IMR-90 (cell line): ENCODE measurements at regions of chr6 and their contacts with region 1.

Region 1: GRCh38 chr6:111483736-111484632 is 966 bp upstream of the REV3L start:
- DNase-seq: peak; percentile 97
- ATAC-seq: peak; percentile 74
- H3K4me3 ChIP-seq: peak overlapping the region; percentile 88
- H3K27ac ChIP-seq: peak overlapping the region; percentile 96
- H3K4me1 ChIP-seq: peaks cover 5% of the 10 kb centered on the region
- H3K27me3 ChIP-seq: no peaks in the 10 kb centered on the region
- CTCF ChIP-seq: 0 out of 2 replicates have a peak, but pooled peaks have one; percentile 3
- POLR2A ChIP-seq: peak; percentile 97
- RAD21 ChIP-seq: no peak; the same call in 1 of the 2 replicates

Region 2: GRCh38 chr6:111259089-111259831 is 224.7 kb before region 1 on chr6:
- CTCF ChIA-PET with region 1: interaction called, 5 read pairs
- POLR2A ChIA-PET with region 1: no interaction called
- dilution Hi-C with region 1: no loop called
- in situ Hi-C with region 1: no loop called
- intact Hi-C with region 1: loop called (anchors 2 kb)
- DNase-seq: peak; percentile 99
- ATAC-seq: peak; percentile 98
- H3K4me3 ChIP-seq: peak overlapping the region; percentile 62
- H3K27ac ChIP-seq: peak overlapping the region; percentile 56
- H3K4me1 ChIP-seq: peaks cover 10% of the 10 kb centered on the region
- H3K27me3 ChIP-seq: no peaks in the 10 kb centered on the region
- CTCF ChIP-seq: peak; percentile 98
- POLR2A ChIP-seq: peak; percentile 85
- RAD21 ChIP-seq: peak; percentile 85

Region 3: GRCh38 chr6:111552241-111552744 is 68.3 kb after region 1 on chr6:
- CTCF ChIA-PET with region 1: interaction called, 3 read pairs
- POLR2A ChIA-PET with region 1: no interaction called
- dilution Hi-C with region 1: no loop called
- in situ Hi-C with region 1: no loop called
- intact Hi-C with region 1: loop called (anchors 2 kb)
- DNase-seq: peak; percentile 98
- ATAC-seq: peak; percentile 87
- H3K4me3 ChIP-seq: no peak overlapping the region
- H3K27ac ChIP-seq: peak overlapping the region; percentile 72
- H3K4me1 ChIP-seq: peaks cover 20% of the 10 kb centered on the region
- H3K27me3 ChIP-seq: no peaks in the 10 kb centered on the region
- CTCF ChIP-seq: no peak
- POLR2A ChIP-seq: no peak
- RAD21 ChIP-seq: peak; percentile 22; the same call in 1 of the 2 replicates

Region 4: DNA sequence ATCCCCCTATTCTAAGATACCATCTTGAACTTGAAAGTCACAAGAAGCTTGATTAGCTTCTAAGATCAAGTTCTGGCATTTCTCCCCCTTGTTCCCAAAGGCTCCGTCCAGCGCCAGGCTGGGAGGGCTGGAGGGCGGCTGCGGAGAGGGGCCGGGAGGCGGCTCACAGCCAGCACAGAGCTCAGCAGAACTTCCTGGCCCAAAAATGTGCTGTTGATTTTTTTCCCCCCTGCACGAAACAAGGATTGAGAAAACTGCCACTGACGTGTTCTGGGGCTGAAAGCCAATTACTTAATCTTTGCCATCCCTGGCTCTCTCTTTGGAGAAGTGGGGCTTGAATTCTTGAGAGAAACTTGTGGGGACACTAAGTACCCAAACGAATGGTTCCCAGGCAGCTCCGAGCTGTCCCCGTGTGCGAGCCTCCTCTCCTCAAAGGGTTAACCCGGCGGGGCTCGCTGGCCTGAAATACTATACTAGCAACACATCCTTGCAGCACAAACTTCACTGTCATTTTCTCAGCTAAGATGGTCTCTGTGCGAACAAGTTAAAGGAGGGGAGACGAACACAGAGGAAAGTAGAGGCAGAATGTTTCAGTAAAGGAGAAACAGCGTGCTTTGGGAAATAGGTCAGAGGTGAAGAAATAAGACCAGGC is 121.2 kb after region 1 on chr6:
- CTCF ChIA-PET with region 1: interaction called, 8 read pairs
- POLR2A ChIA-PET with region 1: interaction called, 10 read pairs
- dilution Hi-C with region 1: no loop called
- in situ Hi-C with region 1: no loop called
- intact Hi-C with region 1: loop called (anchors 1 kb)
- DNase-seq: peak; percentile 86
- ATAC-seq: peak; percentile 42
- H3K4me3 ChIP-seq: peak overlapping the region; percentile 55
- H3K27ac ChIP-seq: peak overlapping the region; percentile 97
- H3K4me1 ChIP-seq: peaks cover 30% of the 10 kb centered on the region
- H3K27me3 ChIP-seq: no peaks in the 10 kb centered on the region
- CTCF ChIP-seq: no peak
- POLR2A ChIP-seq: no peak; the same call in 1 of the 2 replicates
- RAD21 ChIP-seq: peak; percentile 18; the same call in 1 of the 2 replicates

Region 5: GRCh38 chr6:111683749-111684267 is 199.8 kb after region 1 on chr6:
- CTCF ChIA-PET with region 1: no interaction called
- POLR2A ChIA-PET with region 1: no interaction called
- dilution Hi-C with region 1: no loop called
- in situ Hi-C with region 1: no loop called
- intact Hi-C with region 1: loop called (anchors 5 kb)
- DNase-seq: peak; percentile 93
- ATAC-seq: peak; percentile 81
- H3K4me3 ChIP-seq: no peak overlapping the region
- H3K27ac ChIP-seq: peak overlapping the region; percentile 86; the same call in 1 of the 2 replicates
- H3K4me1 ChIP-seq: peaks cover 10% of the 10 kb centered on the region
- H3K27me3 ChIP-seq: no peaks in the 10 kb centered on the region
- CTCF ChIP-seq: no peak
- POLR2A ChIP-seq: no peak
- RAD21 ChIP-seq: no peak